HEK293 (cell line): ENCODE measurements at regions of chr17 and their contacts with region 1.

Region 1: DNA sequence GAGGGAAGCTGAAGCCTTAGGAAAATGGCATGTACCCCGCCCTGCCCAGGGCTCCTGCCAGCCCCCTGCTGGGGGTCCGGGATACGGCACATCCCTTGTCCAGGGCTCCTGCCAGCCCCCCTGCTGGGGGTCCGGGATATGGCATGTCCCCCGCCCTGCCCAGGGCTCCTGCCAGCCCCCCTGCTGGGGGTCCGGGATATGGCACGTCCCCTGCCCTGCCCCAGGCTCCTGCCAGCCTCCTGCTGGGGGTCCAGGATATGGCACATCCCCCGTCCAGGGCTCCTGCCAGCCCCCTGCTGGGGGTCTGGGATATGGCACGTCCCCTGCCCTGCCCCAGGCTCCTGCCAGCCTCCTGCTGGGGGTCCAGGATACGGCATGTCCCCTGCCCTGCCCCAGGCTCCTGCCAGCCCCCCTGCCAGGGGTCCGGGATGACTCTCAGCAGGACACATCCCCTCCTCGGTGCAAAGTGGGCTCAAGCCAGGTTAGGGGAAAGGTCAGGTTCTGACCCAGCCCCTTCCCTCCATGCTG is 43.2 kb downstream of the RPH3AL start:
- H3K4me3 ChIP-seq: no peak overlapping the region
- H3K27ac ChIP-seq: no peak overlapping the region
- H3K4me1 ChIP-seq: no peaks in the 10 kb centered on the region
- CTCF ChIP-seq: no peak

Region 2: DNA sequence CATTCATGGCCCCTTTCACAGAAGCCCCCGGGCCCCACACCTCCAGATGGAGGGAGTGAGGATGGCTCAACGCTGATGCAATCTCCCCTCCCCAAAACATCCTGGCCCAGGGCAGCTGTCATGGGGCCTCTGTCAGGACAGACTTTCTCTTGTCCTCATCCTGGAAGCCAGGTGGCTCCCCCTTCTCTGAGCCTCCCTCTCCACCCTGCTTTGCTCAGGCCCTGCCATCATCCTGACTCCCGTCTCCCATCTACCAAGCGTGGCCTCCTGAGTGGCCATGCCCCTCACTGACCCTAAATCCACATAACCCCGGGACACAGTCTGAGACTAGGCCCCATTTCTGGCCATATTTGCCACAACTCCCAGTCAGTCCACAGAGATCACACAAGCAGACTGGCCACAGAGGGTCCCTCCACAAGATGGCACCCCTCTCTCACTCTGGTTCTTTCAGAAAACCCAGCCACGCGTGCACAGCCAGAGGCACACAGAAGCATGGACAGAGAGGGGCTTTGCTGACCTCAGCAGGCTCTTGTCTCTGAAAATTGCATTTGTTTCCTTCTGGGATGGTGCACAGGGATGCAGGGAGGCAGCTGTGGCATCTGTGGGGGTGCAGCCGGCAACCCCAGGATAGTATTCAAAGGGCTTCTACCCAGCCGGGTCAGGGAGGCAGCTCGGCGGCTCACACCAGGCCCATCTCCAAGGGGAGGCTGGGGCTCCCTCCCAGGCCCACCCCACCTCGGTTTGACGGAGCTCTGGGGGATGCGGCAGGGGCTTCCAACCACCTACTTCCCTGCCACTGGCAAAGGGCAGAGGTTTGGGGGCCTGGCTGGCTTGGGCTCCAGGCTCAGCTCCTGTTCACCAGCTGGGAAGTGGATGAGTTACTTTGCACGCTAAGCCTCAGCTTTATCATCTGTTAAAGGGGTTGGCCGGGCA is 144.9 kb before region 1 on chr17:
- CTCF ChIA-PET with region 1: interaction called, 10 read pairs
- POLR2A ChIA-PET with region 1: no interaction called
- H3K4me3 ChIP-seq: no peak overlapping the region
- H3K27ac ChIP-seq: no peak overlapping the region
- H3K4me1 ChIP-seq: no peaks in the 10 kb centered on the region
- CTCF ChIP-seq: peak; percentile 92

Region 3: DNA sequence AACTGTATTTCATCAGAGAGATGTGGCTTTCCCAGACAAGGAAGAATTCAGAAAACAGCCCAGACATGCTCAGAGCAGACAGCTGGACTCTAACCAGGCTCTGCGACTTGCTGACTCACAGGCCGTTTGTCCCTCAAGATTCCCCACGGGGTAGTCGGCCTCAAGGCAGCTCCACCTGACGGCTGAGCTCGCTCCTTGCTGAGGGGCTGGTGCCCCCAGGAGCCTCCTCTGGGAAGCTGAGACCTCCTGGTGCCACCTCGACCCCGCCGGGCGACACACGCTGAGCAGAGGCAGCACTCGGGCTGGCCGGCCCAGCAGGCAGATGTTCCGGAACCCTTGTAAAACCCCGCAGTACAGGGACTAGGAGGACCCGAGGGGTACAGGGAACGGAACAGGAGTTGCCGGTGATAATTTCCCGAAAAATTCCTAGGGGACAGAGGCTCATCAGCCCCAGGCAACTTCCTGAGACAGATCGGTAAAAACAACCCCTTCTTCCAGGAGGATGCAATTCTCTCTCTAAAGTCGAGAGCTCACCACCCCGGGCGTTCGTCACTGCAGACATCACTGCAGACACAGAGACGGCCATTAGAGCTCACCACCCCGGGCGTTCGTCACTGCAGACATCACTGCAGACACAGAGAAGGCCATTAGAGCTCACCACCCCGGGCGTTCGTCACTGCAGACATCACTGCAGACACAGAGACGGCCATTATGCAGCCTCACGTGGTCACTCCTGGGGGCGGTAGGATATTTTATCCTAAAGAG is 23.3 kb after region 1 on chr17:
- CTCF ChIA-PET with region 1: no interaction called
- POLR2A ChIA-PET with region 1: no interaction called
- H3K4me3 ChIP-seq: no peak overlapping the region
- H3K27ac ChIP-seq: no peak overlapping the region
- H3K4me1 ChIP-seq: peaks cover 9% of the 10 kb centered on the region
- CTCF ChIP-seq: no peak